ENCODE measurements at regions of chr2 and their contacts with region 1.

Region 1: DNA sequence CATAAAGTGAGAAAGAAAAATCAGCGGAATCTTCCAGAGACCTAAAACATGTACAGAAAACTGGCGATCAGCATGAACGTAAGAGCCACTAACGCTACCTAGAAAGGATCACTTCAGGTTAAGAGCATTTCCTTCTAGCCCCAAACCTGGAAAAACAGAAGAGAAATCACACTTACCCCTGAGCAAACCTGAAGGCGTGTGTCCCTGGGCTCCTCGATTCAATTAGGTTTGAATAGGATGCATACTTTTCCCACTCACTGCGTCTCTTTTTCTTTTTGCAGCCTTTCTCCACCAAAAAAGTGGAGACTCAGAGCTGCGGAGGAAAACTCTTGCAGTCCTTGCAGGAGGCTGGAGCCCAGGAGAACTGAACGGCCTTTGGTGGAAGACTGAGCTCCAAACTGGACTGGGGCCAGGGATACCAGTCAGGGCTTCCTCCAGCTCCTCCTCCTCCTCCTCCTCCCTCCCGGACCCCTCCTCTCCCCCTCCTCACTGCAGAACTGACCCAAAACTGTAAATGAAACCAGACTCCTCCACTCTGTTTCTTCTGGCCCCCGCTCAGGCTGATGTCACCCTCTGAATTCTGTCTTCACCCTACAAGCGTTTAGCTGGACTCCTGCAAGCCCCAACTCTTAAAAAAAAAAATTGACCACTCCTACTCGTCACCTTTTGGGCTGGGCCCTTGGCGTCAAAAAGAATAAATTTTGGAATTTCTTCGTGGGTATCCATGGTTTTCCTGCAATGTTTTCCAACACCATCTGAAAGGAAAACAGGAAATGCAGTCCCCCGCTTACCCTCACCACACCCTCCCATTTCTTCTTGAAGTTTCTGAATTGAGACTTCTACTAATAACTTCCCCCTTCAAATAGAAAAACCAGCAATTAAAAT is at the start of gene COL6A3:
- DNase-seq: peak; percentile 98
- ATAC-seq: peak; percentile 78
- H3K4me3 ChIP-seq: peak within 1 kb of the TSS; percentile 96
- H3K27ac ChIP-seq: peak within 1 kb of the TSS; percentile 89
- H3K4me1 ChIP-seq: no peaks in the 10 kb centered on the region
- H3K27me3 ChIP-seq: no peaks in the 10 kb centered on the region
- CTCF ChIP-seq: no peak
- POLR2A ChIP-seq: peak; percentile 98
- RAD21 ChIP-seq: peak; percentile 3; the same call in 1 of the 2 replicates
- total RNA-seq, gene COL6A3: 1,501 and 1,855 TPM in 2 replicates

Region 2: DNA sequence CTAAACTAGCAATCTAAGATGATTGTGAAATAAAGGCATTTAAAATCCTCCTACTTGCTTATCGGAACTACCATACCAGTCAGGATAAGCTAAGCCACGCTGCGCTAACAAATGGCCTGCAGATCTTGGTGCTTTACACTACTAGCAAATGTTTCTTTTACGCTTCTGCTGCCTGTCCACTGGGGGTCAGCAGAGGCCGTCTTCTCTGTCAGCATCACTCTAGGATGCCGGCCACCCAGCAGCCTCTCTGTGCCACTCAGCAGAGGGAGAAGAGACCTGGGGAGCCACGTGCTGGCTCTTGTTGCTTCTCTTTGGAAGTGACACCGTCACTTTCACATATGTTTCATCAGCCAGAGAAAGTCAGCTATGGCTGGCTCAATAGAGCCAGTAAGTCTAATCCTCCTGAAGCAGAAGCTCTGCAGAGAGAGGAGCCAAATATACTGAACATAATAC is 291.8 kb before region 1 on chr2:
- CTCF ChIA-PET with region 1: no interaction called
- POLR2A ChIA-PET with region 1: no interaction called
- dilution Hi-C with region 1: no loop called
- in situ Hi-C with region 1: no loop called
- intact Hi-C with region 1: loop called (anchors 1 kb)
- DNase-seq: peak; percentile 87
- ATAC-seq: peak; percentile 94
- H3K4me3 ChIP-seq: no peak overlapping the region
- H3K27ac ChIP-seq: peak overlapping the region; percentile 53; the same call in 1 of the 2 replicates
- H3K4me1 ChIP-seq: peaks cover 13% of the 10 kb centered on the region
- H3K27me3 ChIP-seq: no peaks in the 10 kb centered on the region
- CTCF ChIP-seq: peak; percentile 84
- POLR2A ChIP-seq: 0 out of 2 replicates have a peak, but pooled peaks have one; percentile 34
- RAD21 ChIP-seq: peak; percentile 93

Region 3: GRCh38 chr2:237171396-237171795 is 242.6 kb before region 1 on chr2:
- CTCF ChIA-PET with region 1: no interaction called
- POLR2A ChIA-PET with region 1: interaction called, 3 read pairs
- dilution Hi-C with region 1: no loop called
- in situ Hi-C with region 1: no loop called
- intact Hi-C with region 1: loop called (anchors 5 kb)
- DNase-seq: peak; percentile 97
- ATAC-seq: peak; percentile 92
- H3K4me3 ChIP-seq: peak overlapping the region; percentile 21; the same call in 1 of the 2 replicates
- H3K27ac ChIP-seq: peak overlapping the region; percentile 97
- H3K4me1 ChIP-seq: peaks cover 11% of the 10 kb centered on the region
- H3K27me3 ChIP-seq: no peaks in the 10 kb centered on the region
- CTCF ChIP-seq: peak; percentile 56
- POLR2A ChIP-seq: peak; percentile 42; the same call in 1 of the 2 replicates
- RAD21 ChIP-seq: peak; percentile 80

Region 4: GRCh38 chr2:237474931-237475703 is 61.1 kb after region 1 on chr2:
- CTCF ChIA-PET with region 1: interaction called, 4 read pairs
- POLR2A ChIA-PET with region 1: interaction called, 12 read pairs
- dilution Hi-C with region 1: no loop called
- in situ Hi-C with region 1: no loop called
- intact Hi-C with region 1: loop called (anchors 1 kb)
- DNase-seq: peak; percentile 77
- ATAC-seq: peak; percentile 93
- H3K4me3 ChIP-seq: peak overlapping the region; percentile 43
- H3K27ac ChIP-seq: peak overlapping the region; percentile 95
- H3K4me1 ChIP-seq: peaks cover 20% of the 10 kb centered on the region
- H3K27me3 ChIP-seq: no peaks in the 10 kb centered on the region
- CTCF ChIP-seq: peak; percentile 85
- POLR2A ChIP-seq: peak; percentile 51
- RAD21 ChIP-seq: peak; percentile 71

Region 5: DNA sequence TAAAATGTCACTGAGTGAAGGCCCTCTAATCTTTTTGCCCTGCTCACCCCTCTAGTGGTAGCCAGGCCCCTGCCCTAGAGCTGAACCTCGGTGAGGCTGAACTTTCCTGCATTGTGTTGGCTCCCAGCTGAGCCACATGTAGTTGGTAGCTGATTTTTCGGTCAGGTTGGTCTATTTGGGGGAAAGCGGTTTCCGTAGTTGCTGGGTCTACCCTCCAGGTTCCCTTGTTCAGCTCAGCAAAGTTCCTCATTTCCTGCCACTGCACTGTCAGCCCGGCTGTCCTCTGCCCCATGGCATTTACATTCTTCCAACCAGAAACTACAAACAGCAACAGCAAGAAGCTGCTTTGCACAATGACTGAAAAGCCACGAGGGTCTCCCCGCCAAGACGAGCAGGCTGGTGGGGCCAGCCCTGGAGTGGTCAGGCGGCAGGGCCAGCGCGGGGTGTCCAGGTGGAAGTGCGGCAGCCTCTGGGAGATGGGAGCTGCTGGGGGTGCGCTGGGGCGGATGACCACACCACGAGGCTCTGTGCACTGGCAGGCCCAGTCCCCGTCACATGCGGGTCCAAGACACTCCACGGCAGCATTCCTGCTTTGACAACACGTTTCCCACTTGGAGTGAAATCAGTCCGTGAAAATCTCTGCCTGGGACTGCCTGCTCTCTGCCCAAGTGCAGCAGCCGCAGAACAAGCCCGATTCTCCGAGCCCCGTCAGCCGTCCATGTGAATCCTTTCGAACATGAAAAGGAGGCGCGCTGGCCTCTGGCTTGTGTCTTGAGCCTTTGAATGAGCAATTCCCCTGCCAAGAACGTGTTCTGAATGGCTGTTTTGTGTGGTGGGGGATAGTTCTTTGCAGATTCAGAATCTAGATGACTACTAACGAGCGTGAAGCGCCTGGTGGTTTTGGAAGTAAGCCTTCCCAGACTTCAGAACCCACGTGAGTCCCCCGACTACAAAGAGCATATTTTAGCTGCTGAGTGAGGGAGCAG is 1172.1 kb after region 1 on chr2:
- CTCF ChIA-PET with region 1: no interaction called
- POLR2A ChIA-PET with region 1: no interaction called
- dilution Hi-C with region 1: no loop called
- in situ Hi-C with region 1: no loop called
- intact Hi-C with region 1: no loop called
- DNase-seq: no peak
- ATAC-seq: no peak
- H3K4me3 ChIP-seq: no peak overlapping the region
- H3K27ac ChIP-seq: no peak overlapping the region
- H3K4me1 ChIP-seq: no peaks in the 10 kb centered on the region
- H3K27me3 ChIP-seq: peaks cover 4% of the 10 kb centered on the region; the same call in 1 of the 2 replicates
- CTCF ChIP-seq: no peak
- POLR2A ChIP-seq: no peak
- RAD21 ChIP-seq: no peak

Measured in IMR-90 (cell line).